WTC11 (cell line): ENCODE measurements at regions of chr20 and their contacts with region 1.

Region 1: GRCh38 chr20:1108437-1108920 is 9.9 kb upstream of the PSMF1 start:
- DNase-seq: peak; percentile 75
- ATAC-seq: peak; percentile 98
- H3K4me3 Mint-ChIP-seq: no peak overlapping the region
- H3K27ac Mint-ChIP-seq: no peak overlapping the region
- H3K4me1 Mint-ChIP-seq: no peaks in the 10 kb centered on the region
- H3K27me3 Mint-ChIP-seq: no peaks in the 10 kb centered on the region; the same call in none of the 2 replicates
- CTCF ChIP-seq: peak; percentile 67

Region 2: GRCh38 chr20:956330-956951 is 152.0 kb before region 1 on chr20:
- CTCF ChIA-PET with region 1: interaction called, 30 read pairs
- POLR2A ChIA-PET with region 1: no interaction called
- DNase-seq: peak; percentile 88
- ATAC-seq: peak; percentile 88
- H3K4me3 Mint-ChIP-seq: no peak overlapping the region
- H3K27ac Mint-ChIP-seq: no peak overlapping the region
- H3K4me1 Mint-ChIP-seq: peaks cover 2% of the 10 kb centered on the region; the same call in 1 of the 2 replicates
- H3K27me3 Mint-ChIP-seq: peaks cover 5% of the 10 kb centered on the region
- CTCF ChIP-seq: peak; percentile 96

Region 3: DNA sequence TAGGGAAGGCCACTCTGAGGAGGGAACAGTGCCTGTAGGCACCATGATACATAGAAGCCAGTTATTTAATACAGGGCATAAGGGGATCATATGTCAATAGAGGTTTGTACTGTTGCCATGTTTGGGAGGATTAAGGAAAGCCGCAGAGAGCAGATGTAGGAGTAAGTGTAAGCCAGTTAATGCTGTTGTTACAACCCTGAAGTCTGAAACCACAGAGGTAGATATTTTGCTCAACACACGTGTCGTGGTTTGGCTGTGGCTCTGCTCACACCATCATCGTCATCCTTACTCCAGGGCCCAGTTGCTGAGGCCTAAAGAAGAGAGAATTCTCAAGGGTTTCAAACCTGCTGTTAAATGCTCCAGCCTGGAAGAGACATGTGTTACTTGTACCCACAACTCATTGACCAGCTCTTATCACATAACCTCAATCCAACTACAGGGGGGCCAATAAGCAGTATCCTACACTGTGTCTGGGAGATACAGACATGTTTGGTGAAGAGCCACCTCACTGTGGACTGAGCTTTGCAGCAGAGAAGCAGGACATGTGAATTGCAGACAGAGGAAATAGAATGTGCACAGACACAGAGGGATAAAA is 21.1 kb before region 1 on chr20:
- CTCF ChIA-PET with region 1: interaction called, 11 read pairs
- POLR2A ChIA-PET with region 1: no interaction called
- DNase-seq: no peak
- ATAC-seq: no peak
- H3K4me3 Mint-ChIP-seq: no peak overlapping the region
- H3K27ac Mint-ChIP-seq: no peak overlapping the region
- H3K4me1 Mint-ChIP-seq: peaks cover 8% of the 10 kb centered on the region
- H3K27me3 Mint-ChIP-seq: peaks cover 23% of the 10 kb centered on the region
- CTCF ChIP-seq: no peak

Region 4: GRCh38 chr20:1118336-1119127 is 10.1 kb after region 1 on chr20 and contains the start of gene PSMF1:
- CTCF ChIA-PET with region 1: interaction called, 17 read pairs
- POLR2A ChIA-PET with region 1: no interaction called
- DNase-seq: peak; percentile 92
- ATAC-seq: peak; percentile 90
- H3K4me3 Mint-ChIP-seq: peak within 1 kb of the TSS; percentile 95
- H3K27ac Mint-ChIP-seq: peak within 1 kb of the TSS; percentile 29
- H3K4me1 Mint-ChIP-seq: peaks cover 36% of the 10 kb centered on the region
- H3K27me3 Mint-ChIP-seq: peaks cover 6% of the 10 kb centered on the region
- CTCF ChIP-seq: no peak
- total RNA-seq, gene PSMF1: 97.3 to 113 TPM (median 107 TPM) in 3 replicates